Right cardiac atrium (tissue), 5 donors: ENCODE measurements at regions of chr7 and their contacts with region 1.

Region 1: GRCh38 chr7:83410989-83411591 is 237.8 kb downstream of the SEMA3E start:
- DNase-seq: no peak
- ATAC-seq: no peak
- H3K4me3 ChIP-seq: no peak overlapping the region
- H3K27ac ChIP-seq: no peak overlapping the region
- H3K4me1 ChIP-seq: no peaks in the 10 kb centered on the region
- H3K27me3 ChIP-seq: peaks cover 3% of the 10 kb centered on the region

Region 2: GRCh38 chr7:83365746-83366145 is 45.3 kb before region 1 on chr7:
- intact Hi-C with region 1: no loop called
- DNase-seq: no peak
- ATAC-seq: no peak
- H3K4me3 ChIP-seq: no peak overlapping the region
- H3K27ac ChIP-seq: no peak overlapping the region
- H3K4me1 ChIP-seq: no peaks in the 10 kb centered on the region
- H3K27me3 ChIP-seq: no peaks in the 10 kb centered on the region

Region 3: GRCh38 chr7:83655951-83656556 is 245.0 kb after region 1 on chr7:
- intact Hi-C with region 1: loop called in 3 of 4 experiments (anchors 5 kb)
- DNase-seq: no peak
- ATAC-seq: no peak
- H3K4me3 ChIP-seq: no peak overlapping the region
- H3K27ac ChIP-seq: no peak overlapping the region
- H3K4me1 ChIP-seq: no peaks in the 10 kb centered on the region
- H3K27me3 ChIP-seq: no peaks in the 10 kb centered on the region

Region 4: DNA sequence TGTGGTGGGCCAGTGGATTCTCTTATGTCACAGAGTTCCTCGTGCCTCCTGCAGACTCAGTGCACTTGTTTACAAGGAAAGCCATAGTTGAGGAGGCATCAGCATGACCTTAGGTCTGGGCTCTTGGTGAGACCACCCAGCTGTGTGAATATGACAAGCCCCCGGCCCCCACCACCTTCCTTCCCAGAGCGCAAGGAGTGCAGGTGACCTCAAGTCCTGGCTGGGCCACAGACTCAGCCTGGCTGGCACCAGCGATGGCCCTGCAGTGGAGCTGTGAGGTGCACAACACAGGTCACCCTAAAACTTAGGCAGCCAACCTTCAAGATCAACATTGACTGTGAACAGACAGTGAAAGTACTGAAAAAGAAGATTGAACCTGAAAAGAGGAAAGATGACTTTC is 252.0 kb after region 1 on chr7:
- intact Hi-C with region 1: loop called in 3 of 4 experiments (anchors 5 kb)
- DNase-seq: no peak
- ATAC-seq: no peak
- H3K4me3 ChIP-seq: no peak overlapping the region
- H3K27ac ChIP-seq: no peak overlapping the region
- H3K4me1 ChIP-seq: no peaks in the 10 kb centered on the region
- H3K27me3 ChIP-seq: no peaks in the 10 kb centered on the region

Region 5: GRCh38 chr7:83876593-83876992 is 465.5 kb after region 1 on chr7:
- intact Hi-C with region 1: no loop called
- DNase-seq: no peak
- ATAC-seq: no peak
- H3K4me3 ChIP-seq: no peak overlapping the region
- H3K27ac ChIP-seq: no peak overlapping the region
- H3K4me1 ChIP-seq: no peaks in the 10 kb centered on the region
- H3K27me3 ChIP-seq: no peaks in the 10 kb centered on the region